Transverse colon (tissue), 4 donors: ENCODE measurements at regions of chr2 and their contacts with region 1.

Region 1: DNA sequence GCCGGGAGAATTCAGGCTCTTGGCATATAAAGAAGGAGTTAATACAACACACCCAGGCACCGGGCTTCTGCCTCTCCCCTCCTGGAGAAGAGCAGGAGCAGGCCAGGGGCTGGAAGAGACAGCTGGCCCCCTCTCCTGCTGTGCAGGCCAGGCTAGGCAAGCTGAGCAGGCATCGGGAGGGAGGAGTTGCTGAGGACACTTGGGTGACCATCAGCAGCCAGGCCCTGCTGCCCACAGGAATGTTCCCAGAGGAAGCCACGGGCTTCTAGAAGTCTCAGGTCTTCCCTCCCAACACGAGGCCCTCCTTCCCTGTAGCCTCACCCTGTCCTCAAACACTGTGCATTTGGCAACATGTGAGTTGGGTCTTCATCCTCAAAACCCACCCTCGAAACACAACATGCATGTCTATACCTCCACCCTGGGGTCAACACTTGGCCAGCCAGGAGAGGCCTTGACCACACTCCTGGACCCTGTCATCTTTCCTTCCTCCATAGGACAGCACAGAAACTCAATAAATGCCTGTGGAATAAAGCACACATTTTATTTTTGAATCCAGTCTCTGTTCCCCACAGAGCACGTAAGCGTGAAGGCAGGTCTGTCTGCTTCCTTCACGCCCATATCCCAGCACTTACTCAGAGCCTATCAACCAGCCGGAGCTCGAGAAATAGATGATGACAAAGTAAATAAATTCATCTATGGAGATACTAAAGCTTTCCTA is 433.8 kb upstream of the ID2 start:
- DNase-seq: no peak
- H3K4me3 ChIP-seq: no peak overlapping the region
- H3K27ac ChIP-seq: no peak overlapping the region
- H3K4me1 ChIP-seq: no peaks in the 10 kb centered on the region
- H3K27me3 ChIP-seq: no peaks in the 10 kb centered on the region
- CTCF ChIP-seq: no peak
- EP300 ChIP-seq: no peak
- POLR2A ChIP-seq: no peak

Region 2: GRCh38 chr2:8389373-8390108 is 141.5 kb after region 1 on chr2:
- in situ Hi-C with region 1: no loop called
- intact Hi-C with region 1: loop called (anchors 2 kb)
- DNase-seq: no peak
- H3K4me3 ChIP-seq: no peak overlapping the region
- H3K27ac ChIP-seq: peak overlapping the region in 2 of 4 donors; percentile 28 to 45
- H3K4me1 ChIP-seq: peaks cover 0 to 14% (median 7%) of the 10 kb centered on the region in 4 donors
- H3K27me3 ChIP-seq: no peaks in the 10 kb centered on the region
- CTCF ChIP-seq: no peak
- EP300 ChIP-seq: no peak
- POLR2A ChIP-seq: no peak

Region 3: DNA sequence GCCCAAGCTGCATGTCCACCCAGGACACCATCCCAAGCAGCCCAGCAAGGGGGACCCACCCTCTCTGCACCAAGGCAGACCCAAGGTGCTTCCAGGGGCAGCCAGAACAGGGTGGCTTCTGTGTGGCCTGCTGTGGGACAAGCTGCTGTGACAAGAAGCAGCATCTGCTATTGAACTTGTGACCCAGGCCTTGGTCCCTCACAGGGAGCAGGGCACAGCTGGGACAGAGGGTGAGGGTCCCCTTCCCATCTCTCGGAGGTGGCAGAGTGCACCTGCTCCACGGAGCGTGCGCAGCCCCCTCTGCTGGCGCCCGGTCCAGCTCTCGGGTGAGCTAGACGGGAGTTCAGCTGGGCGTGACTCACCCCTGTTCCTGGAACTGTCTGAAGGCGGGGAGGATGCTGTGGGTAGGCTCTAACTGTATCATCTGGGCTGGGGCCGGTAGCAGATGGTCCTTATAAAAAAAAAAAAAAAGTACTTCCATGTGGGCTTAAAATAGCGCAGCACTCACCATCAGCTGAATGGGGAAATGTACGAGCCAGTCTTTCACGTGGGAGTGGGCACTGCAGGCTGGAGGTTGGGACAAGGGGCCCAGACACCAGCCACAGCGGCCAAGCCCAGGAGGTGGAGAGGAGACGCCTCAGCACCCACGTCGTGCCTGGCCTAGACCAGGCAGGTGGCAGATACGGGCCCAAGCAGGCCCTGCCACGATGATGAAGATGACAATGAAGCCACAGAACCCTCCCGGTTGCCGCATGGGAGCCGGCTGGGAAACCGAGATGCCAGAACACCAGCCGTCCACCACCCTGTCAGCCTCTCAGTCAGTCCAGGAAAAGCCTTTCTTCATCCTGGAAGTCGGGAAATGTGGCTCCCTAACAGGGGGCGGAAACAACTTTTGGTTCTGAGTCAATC is 297.0 kb after region 1 on chr2:
- in situ Hi-C with region 1: no loop called
- intact Hi-C with region 1: no loop called
- DNase-seq: peak; percentile 73
- H3K4me3 ChIP-seq: no peak overlapping the region
- H3K27ac ChIP-seq: peak overlapping the region; percentile 6 to 76 (median 66)
- H3K4me1 ChIP-seq: peaks cover 4 to 32% (median 11%) of the 10 kb centered on the region in 4 donors
- H3K27me3 ChIP-seq: no peaks in the 10 kb centered on the region
- CTCF ChIP-seq: peak in 1 of 5 experiments; percentile 17
- EP300 ChIP-seq: no peak
- POLR2A ChIP-seq: no peak

Region 4: GRCh38 chr2:8729939-8730338 is 481.9 kb after region 1 on chr2:
- in situ Hi-C with region 1: no loop called
- intact Hi-C with region 1: no loop called
- DNase-seq: no peak
- H3K4me3 ChIP-seq: no peak overlapping the region
- H3K27ac ChIP-seq: no peak overlapping the region
- H3K4me1 ChIP-seq: no peaks in the 10 kb centered on the region
- H3K27me3 ChIP-seq: no peaks in the 10 kb centered on the region
- CTCF ChIP-seq: no peak
- EP300 ChIP-seq: no peak
- POLR2A ChIP-seq: no peak